ENCODE measurements at regions of chr2 and their contacts with region 1.

Region 1: GRCh38 chr2:219498280-219499057 is at the start of gene GMPPA:
- DNase-seq: peak; percentile 97
- H3K4me3 Mint-ChIP-seq: peak within 1 kb of the TSS; percentile 83
- H3K27ac Mint-ChIP-seq: peak within 1 kb of the TSS; percentile 72
- H3K4me1 Mint-ChIP-seq: peaks cover 38% of the 10 kb centered on the region
- H3K27me3 Mint-ChIP-seq: peaks cover 41% of the 10 kb centered on the region
- total RNA-seq, gene GMPPA: 37.1 to 37.4 TPM

Region 2: DNA sequence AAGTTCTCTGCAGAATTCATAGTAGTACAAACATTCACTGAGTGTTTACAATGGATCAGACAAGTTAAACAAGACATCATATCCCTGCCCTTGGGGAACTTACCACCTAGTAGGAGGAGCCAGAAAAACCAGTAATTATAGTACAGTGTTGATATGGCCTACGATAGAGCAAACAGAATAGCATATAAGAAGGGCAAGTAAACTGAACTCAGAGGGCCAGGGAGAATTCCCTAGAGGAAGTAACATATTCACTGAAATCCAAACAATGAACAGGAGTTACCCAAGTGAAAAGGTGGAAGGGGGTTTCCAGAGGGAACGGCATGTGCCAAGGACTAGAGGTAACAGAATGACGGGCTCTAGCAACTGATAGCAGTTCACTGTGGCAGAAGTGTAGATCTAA is 371.9 kb before region 1 on chr2:
- CTCF ChIA-PET with region 1: no interaction called
- POLR2A ChIA-PET with region 1: no interaction called
- intact Hi-C with region 1: no loop called
- DNase-seq: no peak
- H3K4me3 Mint-ChIP-seq: no peak overlapping the region
- H3K27ac Mint-ChIP-seq: no peak overlapping the region
- H3K4me1 Mint-ChIP-seq: peaks cover 14% of the 10 kb centered on the region
- H3K27me3 Mint-ChIP-seq: no peaks in the 10 kb centered on the region

Region 3: DNA sequence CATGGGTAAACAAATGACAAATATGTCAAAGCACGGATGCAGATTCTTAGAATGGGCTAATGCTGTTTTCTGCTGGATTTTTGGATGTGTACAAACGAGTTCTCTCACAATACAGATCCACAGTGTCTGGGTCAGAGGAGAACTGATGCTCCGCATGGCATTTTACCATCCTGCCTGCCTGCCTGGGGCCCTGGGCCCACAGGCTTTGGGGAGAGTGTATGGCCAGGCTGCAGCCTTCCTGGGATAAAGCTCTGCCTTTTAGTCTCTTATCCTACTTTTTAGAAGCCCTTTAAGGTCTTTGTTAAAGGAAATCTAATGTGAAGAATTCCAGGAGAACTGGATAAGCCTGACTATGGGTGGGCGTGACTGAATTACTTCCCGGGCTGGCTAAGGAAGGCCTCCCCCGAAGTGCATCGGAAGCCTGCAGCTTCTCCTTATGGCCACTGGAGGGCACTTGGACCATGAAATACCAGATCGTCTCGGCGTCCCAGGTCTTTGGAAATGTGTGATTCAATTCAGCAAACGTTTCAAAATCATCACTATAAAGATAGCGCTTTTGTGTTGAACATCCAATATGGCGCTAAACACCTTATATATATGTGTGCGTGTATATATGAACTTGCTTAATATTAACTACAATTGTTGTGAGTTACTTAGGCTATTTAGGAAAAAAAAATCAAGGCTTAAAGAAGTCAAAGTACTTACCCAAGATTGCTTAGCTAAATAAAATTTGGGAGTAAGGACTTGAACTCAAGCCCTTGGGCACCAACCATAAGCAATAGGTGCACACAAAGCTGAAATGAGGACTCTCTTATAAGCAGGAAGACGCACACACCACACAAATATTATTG is 95.6 kb before region 1 on chr2:
- CTCF ChIA-PET with region 1: interaction called, 27 read pairs
- POLR2A ChIA-PET with region 1: no interaction called
- intact Hi-C with region 1: no loop called
- DNase-seq: peak; percentile 70
- H3K4me3 Mint-ChIP-seq: no peak overlapping the region
- H3K27ac Mint-ChIP-seq: no peak overlapping the region
- H3K4me1 Mint-ChIP-seq: no peaks in the 10 kb centered on the region
- H3K27me3 Mint-ChIP-seq: peaks cover 5% of the 10 kb centered on the region

Region 4: GRCh38 chr2:219459460-219460311 is 38.8 kb before region 1 on chr2:
- CTCF ChIA-PET with region 1: interaction called, 10 read pairs
- POLR2A ChIA-PET with region 1: no interaction called
- intact Hi-C with region 1: no loop called
- DNase-seq: peak; percentile 51
- H3K4me3 Mint-ChIP-seq: no peak overlapping the region
- H3K27ac Mint-ChIP-seq: no peak overlapping the region
- H3K4me1 Mint-ChIP-seq: peaks cover 5% of the 10 kb centered on the region
- H3K27me3 Mint-ChIP-seq: no peaks in the 10 kb centered on the region

Region 5: GRCh38 chr2:219484343-219485200 is 13.9 kb before region 1 on chr2:
- CTCF ChIA-PET with region 1: interaction called, 22 read pairs
- POLR2A ChIA-PET with region 1: interaction called, 3 read pairs
- intact Hi-C with region 1: no loop called
- DNase-seq: no peak
- H3K4me3 Mint-ChIP-seq: no peak overlapping the region
- H3K27ac Mint-ChIP-seq: no peak overlapping the region
- H3K4me1 Mint-ChIP-seq: peaks cover 2% of the 10 kb centered on the region
- H3K27me3 Mint-ChIP-seq: peaks cover 35% of the 10 kb centered on the region

Region 6: DNA sequence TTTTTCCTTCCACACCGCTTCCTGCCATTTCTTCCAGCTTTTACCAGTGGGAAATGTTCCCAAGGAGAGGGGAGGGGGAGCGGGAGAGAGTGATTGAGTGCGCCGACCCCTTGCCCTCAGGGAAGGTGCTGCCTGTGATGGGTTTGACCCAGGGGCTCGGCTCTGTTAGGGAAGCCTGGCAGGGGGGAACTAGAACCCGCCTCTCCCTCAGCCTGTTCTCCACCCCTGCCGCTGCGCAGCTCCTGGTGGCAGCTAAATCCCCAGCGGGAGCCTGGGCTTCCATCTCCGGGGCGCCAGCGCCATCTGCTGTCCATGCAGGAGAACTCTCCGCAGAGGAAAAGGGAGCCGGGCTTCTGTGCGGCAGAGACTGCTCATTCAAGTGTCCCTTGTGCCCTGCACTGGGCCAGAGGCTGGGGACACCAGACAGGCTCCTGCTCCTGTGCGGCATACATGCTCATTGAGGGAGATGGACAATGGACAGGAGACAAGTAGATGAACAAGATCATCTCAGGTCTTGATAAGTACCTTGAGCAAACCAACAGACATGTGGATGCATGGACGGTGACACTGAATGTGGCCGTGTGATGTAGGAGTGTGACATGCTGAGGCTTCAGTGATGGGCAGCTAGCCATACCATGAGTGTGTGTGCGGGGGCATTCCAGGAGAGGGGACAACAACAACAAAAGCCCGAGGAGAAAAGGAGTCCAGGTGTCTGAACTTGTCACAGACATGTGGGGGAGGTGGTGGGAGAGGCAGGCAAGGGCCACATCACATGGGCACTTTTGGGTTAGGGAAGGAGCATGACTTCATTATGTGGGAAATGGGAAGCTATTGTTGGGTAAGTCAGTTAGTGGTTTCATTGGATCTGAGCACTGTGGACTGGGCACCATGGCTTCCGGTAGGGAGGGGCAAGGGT is 31.8 kb after region 1 on chr2:
- CTCF ChIA-PET with region 1: interaction called, 277 read pairs
- POLR2A ChIA-PET with region 1: interaction called, 5 read pairs
- intact Hi-C with region 1: loop called (anchors 1 kb)
- DNase-seq: peak; percentile 88
- H3K4me3 Mint-ChIP-seq: no peak overlapping the region
- H3K27ac Mint-ChIP-seq: no peak overlapping the region
- H3K4me1 Mint-ChIP-seq: no peaks in the 10 kb centered on the region
- H3K27me3 Mint-ChIP-seq: peaks cover 55% of the 10 kb centered on the region

Region 7: GRCh38 chr2:219552382-219553167 is 54.1 kb after region 1 on chr2:
- CTCF ChIA-PET with region 1: no interaction called
- POLR2A ChIA-PET with region 1: no interaction called
- intact Hi-C with region 1: loop called (anchors 1 kb)
- DNase-seq: peak; percentile 85
- H3K4me3 Mint-ChIP-seq: peak overlapping the region; percentile 68
- H3K27ac Mint-ChIP-seq: no peak overlapping the region
- H3K4me1 Mint-ChIP-seq: peaks cover 10% of the 10 kb centered on the region
- H3K27me3 Mint-ChIP-seq: peaks cover 37% of the 10 kb centered on the region

Measured in activated CD4-positive, alpha-beta memory T cell treated with anti-CD3 and anti-CD28 coated beads for 36 hours (primary cell).